ENCODE measurements at regions of chr2 and their contacts with region 1.

Region 1: GRCh38 chr2:10448208-10448645 is at the start of gene ODC1:
- DNase-seq: peak; percentile 96 to 97
- H3K4me3 ChIP-seq: peak within 1 kb of the TSS; percentile 75 to 78
- H3K27ac ChIP-seq: peak within 1 kb of the TSS; percentile 89 to 97
- H3K4me1 ChIP-seq: peaks cover 0 to 48% (median 40%) of the 10 kb centered on the region in 4 donors
- H3K27me3 ChIP-seq: no peaks in the 10 kb centered on the region
- CTCF ChIP-seq: no peak

Region 2: DNA sequence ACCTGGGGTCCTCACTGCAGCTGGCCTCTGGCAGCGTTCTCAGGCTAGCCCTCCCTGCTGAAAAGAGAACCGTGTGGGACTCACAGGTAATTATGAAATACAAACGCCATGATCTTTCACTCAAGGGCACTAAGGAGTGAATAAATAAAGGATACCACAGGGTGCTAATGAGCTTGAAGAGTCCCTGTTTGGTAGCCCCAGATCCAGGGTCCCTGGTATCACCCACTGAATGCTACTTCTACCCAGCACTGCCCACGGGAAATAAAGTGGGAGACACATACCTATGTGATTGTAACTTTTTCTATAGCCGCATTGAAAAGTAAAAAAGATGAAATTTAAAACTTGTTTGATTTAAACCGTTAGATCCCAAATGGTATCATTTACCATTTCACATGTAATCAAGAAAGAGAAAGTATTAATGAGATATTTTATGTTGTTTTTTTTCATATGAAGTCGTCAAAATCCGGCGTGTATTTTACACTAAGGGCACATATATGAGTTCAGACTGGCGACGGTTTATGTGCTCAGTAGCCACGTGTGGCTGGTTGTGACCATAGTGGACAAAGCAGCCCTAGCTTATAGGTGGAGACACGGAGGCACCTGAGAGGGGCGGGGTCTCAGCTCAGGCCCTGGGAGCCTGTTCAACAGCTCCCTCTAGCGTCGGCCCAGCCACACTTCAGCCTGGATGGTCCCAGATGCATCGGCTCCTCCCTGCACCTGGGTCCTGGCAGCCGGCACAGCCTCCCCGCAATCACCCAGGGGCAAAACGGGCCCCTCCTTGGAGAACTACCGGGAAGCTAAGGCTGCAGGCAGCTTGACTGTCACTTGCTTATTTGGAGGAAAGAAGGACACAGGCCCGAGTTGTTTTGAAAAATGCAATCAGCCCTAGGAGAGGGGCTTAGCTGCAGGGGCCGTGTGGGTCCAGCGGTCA is 39.3 kb before region 1 on chr2:
- intact Hi-C with region 1: no loop called
- DNase-seq: peak; percentile 52 to 83
- H3K4me3 ChIP-seq: no peak overlapping the region
- H3K27ac ChIP-seq: peak overlapping the region; percentile 1 to 20
- H3K4me1 ChIP-seq: peaks cover 10 to 65% (median 55%) of the 10 kb centered on the region in 4 donors
- H3K27me3 ChIP-seq: no peaks in the 10 kb centered on the region
- CTCF ChIP-seq: peak; percentile 90 to 94

Region 3: DNA sequence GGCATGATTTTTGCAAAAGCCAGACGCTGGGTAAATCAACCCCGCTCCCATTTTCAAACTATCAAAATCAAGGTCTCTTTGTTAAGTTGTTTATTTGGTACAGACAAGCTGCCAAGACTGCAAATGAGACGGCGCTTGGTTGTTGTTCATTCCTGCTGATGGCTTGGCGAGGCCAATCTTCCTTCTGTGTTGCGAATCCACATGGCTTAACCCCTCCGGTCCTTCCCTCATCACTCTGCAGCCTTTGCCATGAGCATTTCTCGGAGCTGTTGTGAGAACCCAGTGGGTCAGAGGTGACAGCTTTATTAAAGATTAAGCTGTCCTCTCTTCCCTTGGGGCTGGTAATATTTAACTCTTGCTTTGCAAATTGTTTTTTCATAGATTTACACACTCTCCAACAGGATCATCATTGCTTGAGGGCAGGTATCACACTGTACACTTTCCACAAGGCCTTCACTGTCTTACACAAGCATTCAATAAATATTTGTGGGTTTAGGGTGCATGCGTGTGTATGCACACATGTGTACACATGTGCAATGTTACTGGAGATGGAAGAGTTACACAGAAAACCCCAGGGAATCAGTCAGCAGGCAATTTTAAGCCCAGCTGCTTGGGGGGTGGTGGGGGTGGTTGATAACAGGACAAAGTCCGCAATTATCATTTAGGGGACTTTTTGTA is 435.7 kb after region 1 on chr2:
- intact Hi-C with region 1: no loop called
- DNase-seq: no peak
- H3K4me3 ChIP-seq: no peak overlapping the region
- H3K27ac ChIP-seq: no peak overlapping the region
- H3K4me1 ChIP-seq: no peaks in the 10 kb centered on the region
- H3K27me3 ChIP-seq: peaks cover 0 to 6% of the 10 kb centered on the region in 2 donors
- CTCF ChIP-seq: no peak

Region 4: DNA sequence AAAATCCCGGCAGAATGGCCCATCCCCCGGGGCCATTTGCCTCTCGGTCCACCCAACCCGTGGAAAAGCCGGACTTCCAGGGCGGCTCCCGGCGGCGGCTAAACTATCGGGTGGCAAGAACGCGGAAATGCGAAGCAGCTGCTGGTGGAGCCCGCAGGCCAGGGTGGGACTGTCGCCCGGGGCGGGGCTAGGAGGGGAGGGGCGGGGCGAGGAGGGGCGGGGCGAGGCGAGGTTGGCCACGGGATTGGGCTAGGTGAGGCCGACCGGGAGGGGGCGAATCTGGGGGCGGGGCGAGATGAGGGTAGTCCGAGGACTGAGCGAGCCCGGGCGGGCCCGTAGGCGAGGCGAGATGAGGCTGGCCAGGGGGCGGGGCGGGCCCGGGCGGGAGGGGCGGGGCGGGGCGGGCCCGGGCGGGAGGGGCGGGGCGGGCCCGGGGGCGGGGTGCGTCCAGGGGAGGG is 706.7 kb after region 1 on chr2:
- intact Hi-C with region 1: loop called (anchors 10 kb)
- DNase-seq: peak; percentile 98 to 99
- H3K4me3 ChIP-seq: peak overlapping the region; percentile 68 to 77
- H3K27ac ChIP-seq: peak overlapping the region; percentile 91 to 93
- H3K4me1 ChIP-seq: peaks cover 0 to 26% (median 19%) of the 10 kb centered on the region in 4 donors
- H3K27me3 ChIP-seq: no peaks in the 10 kb centered on the region
- CTCF ChIP-seq: no peak